ENCODE measurements at regions of chr1 and their contacts with region 1.

Region 1: GRCh38 chr1:146019231-146020057 is 2.1 kb downstream of the HJV start:
- DNase-seq: peak in 1 of 2 experiments; percentile 80
- H3K4me3 ChIP-seq: peak overlapping the region; percentile 31 to 58 (median 39)
- H3K27ac ChIP-seq: no peak overlapping the region
- H3K4me1 ChIP-seq: peaks cover 4 to 9% (median 6%) of the 10 kb centered on the region in 4 experiments
- H3K27me3 ChIP-seq: peaks cover 6 to 30% (median 24%) of the 10 kb centered on the region in 4 experiments
- CTCF ChIP-seq: peak in 1 of 3 experiments; percentile 0; a peak in 1 of 4 replicates
- EP300 ChIP-seq: no peak
- POLR2A ChIP-seq: peak in 1 of 2 experiments; percentile 54; a peak in 1 of 3 replicates
- RAD21 ChIP-seq: peak in 1 of 2 experiments; percentile 22; a peak in 1 of 4 replicates

Region 2: DNA sequence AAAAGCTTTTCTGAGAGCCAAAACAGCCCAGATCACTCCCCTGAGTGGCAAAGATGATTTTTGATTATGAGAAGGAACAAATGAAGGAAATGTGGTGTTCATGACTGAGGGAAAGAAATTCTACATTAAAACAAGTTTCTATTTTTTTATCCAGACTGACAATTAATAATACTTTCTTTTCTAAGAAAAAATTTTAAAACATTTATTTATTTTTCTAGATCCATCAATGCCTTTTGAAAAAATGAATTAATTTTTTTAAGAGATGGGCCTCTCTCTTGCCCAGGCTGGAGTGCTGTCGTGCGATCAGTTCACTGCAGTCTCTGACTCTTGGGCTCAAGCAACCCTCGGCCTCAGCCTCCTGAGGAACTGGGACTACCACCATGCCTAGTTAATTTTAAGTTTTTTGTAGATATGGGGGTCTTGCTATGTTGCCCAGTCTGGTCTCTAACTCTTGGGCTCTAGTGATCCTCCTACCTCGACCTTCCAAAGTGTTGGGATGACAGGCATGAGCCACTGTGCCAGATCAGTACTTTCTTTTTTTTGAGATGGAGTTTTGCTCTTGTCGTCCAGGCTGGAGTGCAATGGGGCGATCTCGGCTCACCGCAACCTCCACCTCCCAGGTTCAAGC is 11.8 kb before region 1 on chr1:
- CTCF ChIA-PET with region 1: interaction called, 23 read pairs
- POLR2A ChIA-PET with region 1: interaction called, 3 read pairs
- DNase-seq: no peak
- H3K4me3 ChIP-seq: no peak overlapping the region
- H3K27ac ChIP-seq: no peak overlapping the region
- H3K4me1 ChIP-seq: no peaks in the 10 kb centered on the region; a peak in 1 of 7 replicates
- H3K27me3 ChIP-seq: no peaks in the 10 kb centered on the region
- CTCF ChIP-seq: no peak
- EP300 ChIP-seq: no peak
- POLR2A ChIP-seq: no peak
- RAD21 ChIP-seq: no peak

Region 3: DNA sequence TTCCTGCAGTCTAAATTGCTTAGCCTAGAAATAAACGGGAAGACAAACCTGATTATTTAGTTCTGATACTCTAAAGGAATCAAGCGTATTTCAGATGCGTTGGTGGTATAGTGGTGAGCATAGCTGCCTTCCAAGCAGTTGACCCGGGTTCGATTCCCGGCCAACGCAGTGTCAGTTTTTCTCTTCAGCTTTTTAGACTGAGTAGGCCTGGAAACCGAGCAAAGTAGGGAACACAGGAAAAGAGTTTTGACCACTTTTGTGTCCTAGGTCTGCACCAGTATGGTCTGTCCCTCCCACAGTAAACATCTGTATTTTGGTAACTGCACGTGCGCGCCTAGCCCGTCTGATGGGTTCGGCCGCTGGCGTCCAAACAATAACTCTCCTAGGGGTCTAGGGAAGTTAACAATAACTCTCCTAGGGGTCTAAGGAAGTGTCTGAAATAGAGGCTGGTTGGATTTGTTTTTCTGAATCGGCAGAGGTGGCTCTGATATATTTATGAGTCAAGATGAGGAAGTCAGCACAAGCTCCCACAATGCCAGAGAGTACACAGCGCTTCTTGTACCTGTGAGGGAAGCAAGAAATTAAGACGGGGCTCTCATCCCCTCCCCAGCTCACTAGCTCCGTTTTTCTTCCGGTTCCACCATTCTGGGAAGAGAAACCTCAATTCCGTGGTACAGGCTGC is 17.7 kb after region 1 on chr1:
- CTCF ChIA-PET with region 1: interaction called, 19 read pairs
- POLR2A ChIA-PET with region 1: interaction called, 4 read pairs
- DNase-seq: peak in 1 of 2 experiments; percentile 87
- H3K4me3 ChIP-seq: peak overlapping the region; percentile 73 to 93 (median 88)
- H3K27ac ChIP-seq: peak overlapping the region; percentile 40
- H3K4me1 ChIP-seq: peaks cover 0 to 3% (median 0%) of the 10 kb centered on the region in 4 experiments; a peak in 1 of 7 replicates
- H3K27me3 ChIP-seq: no peaks in the 10 kb centered on the region
- CTCF ChIP-seq: no peak
- EP300 ChIP-seq: no peak
- POLR2A ChIP-seq: no peak
- RAD21 ChIP-seq: no peak

Measured in H1 (cell line).